Keratinocyte (primary cell): ENCODE measurements at regions of chr1 and their contacts with region 1.

Region 1: GRCh38 chr1:22983934-22984333 is 11.3 kb upstream of the LACTBL1 start:
- DNase-seq: no peak
- H3K4me3 ChIP-seq: no peak overlapping the region
- H3K27ac ChIP-seq: no peak overlapping the region
- H3K4me1 ChIP-seq: no peaks in the 10 kb centered on the region
- H3K27me3 ChIP-seq: no peaks in the 10 kb centered on the region
- CTCF ChIP-seq: no peak

Region 2: DNA sequence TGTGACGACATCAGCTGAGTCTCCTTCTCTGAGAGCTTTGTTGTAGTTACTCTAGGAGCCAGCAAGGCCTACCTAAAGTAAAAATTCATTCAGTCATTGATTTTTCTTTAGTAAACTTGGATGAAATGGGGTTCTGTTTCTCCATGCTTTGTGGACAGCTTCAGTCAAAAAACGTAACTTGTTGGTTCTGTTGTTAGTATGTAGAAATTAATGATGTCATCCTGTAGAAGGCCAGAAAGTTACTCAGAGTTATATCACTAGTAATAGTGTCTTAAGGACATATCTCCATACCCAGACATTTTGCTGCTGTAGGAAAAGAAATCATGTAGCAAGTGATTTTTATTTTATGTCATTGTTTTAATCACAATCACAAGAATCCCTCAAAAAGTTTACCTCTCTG is 78.3 kb after region 1 on chr1:
- dilution Hi-C with region 1: loop called (anchors 10 kb)
- DNase-seq: no peak
- H3K4me3 ChIP-seq: no peak overlapping the region
- H3K27ac ChIP-seq: no peak overlapping the region
- H3K4me1 ChIP-seq: no peaks in the 10 kb centered on the region
- H3K27me3 ChIP-seq: no peaks in the 10 kb centered on the region
- CTCF ChIP-seq: no peak